Activated B cell treated with CpG ODN at 0.5 μM for 24 hours (primary cell): ENCODE measurements at regions of chr7 and their contacts with region 1.

Region 1: DNA sequence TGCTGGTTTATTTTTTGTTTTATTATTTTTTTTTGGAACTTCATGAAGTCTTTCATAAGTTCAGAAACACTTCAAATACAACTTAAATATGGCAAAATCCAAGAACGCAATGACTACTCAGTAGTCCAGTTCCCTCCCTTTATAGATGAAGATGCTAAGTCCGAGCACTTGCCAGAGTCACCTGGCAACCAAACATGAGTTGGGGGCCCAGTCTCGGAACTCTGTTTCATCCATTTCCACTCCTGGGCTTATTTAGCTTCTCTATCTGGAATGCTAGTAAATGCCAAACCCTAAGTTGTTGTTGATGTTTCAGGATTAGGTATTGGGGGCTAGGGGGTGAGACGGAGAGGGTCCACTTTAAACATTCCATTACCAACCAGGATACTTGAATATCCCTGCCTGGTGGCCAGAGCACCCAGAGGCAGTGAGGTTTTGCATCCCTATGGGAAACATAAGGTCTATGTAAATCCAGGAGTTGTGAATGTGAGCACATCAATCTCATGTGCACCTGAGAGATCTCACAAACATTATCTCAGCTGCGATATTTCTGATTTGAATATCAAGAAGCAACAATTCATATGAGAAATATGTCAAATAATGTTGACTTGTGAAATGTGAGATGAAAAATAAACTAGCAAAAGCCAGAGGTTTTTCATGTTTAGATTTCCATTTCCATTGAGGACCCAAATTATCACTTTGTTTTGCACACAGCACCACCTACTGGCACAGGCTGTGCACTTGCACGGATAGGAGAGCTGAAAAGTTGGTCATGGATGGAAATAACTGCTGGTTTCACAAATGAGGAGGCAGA is 129.3 kb downstream of the PKD1L1 start:
- DNase-seq: no peak
- ATAC-seq: peak; percentile 77
- H3K4me3 Mint-ChIP-seq: no peak overlapping the region
- H3K27ac Mint-ChIP-seq: no peak overlapping the region
- H3K4me1 Mint-ChIP-seq: peaks cover 7% of the 10 kb centered on the region
- H3K27me3 Mint-ChIP-seq: no peaks in the 10 kb centered on the region
- CTCF ChIP-seq: peak; percentile 85

Region 2: GRCh38 chr7:47266131-47266706 is 552.8 kb before region 1 on chr7:
- CTCF ChIA-PET with region 1: interaction called, 77 read pairs
- POLR2A ChIA-PET with region 1: interaction called, 4 read pairs
- intact Hi-C with region 1: loop called (anchors 1 kb)
- DNase-seq: peak; percentile 50
- ATAC-seq: peak; percentile 92
- H3K4me3 Mint-ChIP-seq: no peak overlapping the region
- H3K27ac Mint-ChIP-seq: no peak overlapping the region
- H3K4me1 Mint-ChIP-seq: no peaks in the 10 kb centered on the region
- H3K27me3 Mint-ChIP-seq: no peaks in the 10 kb centered on the region
- CTCF ChIP-seq: peak; percentile 60

Region 3: GRCh38 chr7:47383072-47383471 is 435.9 kb before region 1 on chr7:
- CTCF ChIA-PET with region 1: no interaction called
- POLR2A ChIA-PET with region 1: no interaction called
- intact Hi-C with region 1: no loop called
- DNase-seq: no peak
- ATAC-seq: no peak
- H3K4me3 Mint-ChIP-seq: no peak overlapping the region
- H3K27ac Mint-ChIP-seq: no peak overlapping the region
- H3K4me1 Mint-ChIP-seq: no peaks in the 10 kb centered on the region
- H3K27me3 Mint-ChIP-seq: no peaks in the 10 kb centered on the region
- CTCF ChIP-seq: no peak

Region 4: GRCh38 chr7:47435889-47436312 is 383.1 kb before region 1 on chr7:
- CTCF ChIA-PET with region 1: interaction called, 9 read pairs
- POLR2A ChIA-PET with region 1: no interaction called
- intact Hi-C with region 1: loop called (anchors 2 kb)
- DNase-seq: no peak
- ATAC-seq: no peak
- H3K4me3 Mint-ChIP-seq: no peak overlapping the region
- H3K27ac Mint-ChIP-seq: no peak overlapping the region
- H3K4me1 Mint-ChIP-seq: no peaks in the 10 kb centered on the region
- H3K27me3 Mint-ChIP-seq: no peaks in the 10 kb centered on the region
- CTCF ChIP-seq: no peak

Region 5: GRCh38 chr7:47444379-47445057 is 374.5 kb before region 1 on chr7:
- CTCF ChIA-PET with region 1: interaction called, 47 read pairs
- POLR2A ChIA-PET with region 1: interaction called, 5 read pairs
- intact Hi-C with region 1: loop called (anchors 1 kb)
- DNase-seq: no peak
- ATAC-seq: peak; percentile 72
- H3K4me3 Mint-ChIP-seq: no peak overlapping the region
- H3K27ac Mint-ChIP-seq: no peak overlapping the region
- H3K4me1 Mint-ChIP-seq: peaks cover 22% of the 10 kb centered on the region
- H3K27me3 Mint-ChIP-seq: no peaks in the 10 kb centered on the region
- CTCF ChIP-seq: no peak

Region 6: GRCh38 chr7:47497367-47498096 is 321.5 kb before region 1 on chr7:
- CTCF ChIA-PET with region 1: interaction called, 11 read pairs
- POLR2A ChIA-PET with region 1: no interaction called
- intact Hi-C with region 1: no loop called
- DNase-seq: no peak
- ATAC-seq: peak; percentile 81
- H3K4me3 Mint-ChIP-seq: peak overlapping the region; percentile 64
- H3K27ac Mint-ChIP-seq: peak overlapping the region; percentile 87
- H3K4me1 Mint-ChIP-seq: peaks cover 70% of the 10 kb centered on the region
- H3K27me3 Mint-ChIP-seq: no peaks in the 10 kb centered on the region
- CTCF ChIP-seq: no peak

Region 7: DNA sequence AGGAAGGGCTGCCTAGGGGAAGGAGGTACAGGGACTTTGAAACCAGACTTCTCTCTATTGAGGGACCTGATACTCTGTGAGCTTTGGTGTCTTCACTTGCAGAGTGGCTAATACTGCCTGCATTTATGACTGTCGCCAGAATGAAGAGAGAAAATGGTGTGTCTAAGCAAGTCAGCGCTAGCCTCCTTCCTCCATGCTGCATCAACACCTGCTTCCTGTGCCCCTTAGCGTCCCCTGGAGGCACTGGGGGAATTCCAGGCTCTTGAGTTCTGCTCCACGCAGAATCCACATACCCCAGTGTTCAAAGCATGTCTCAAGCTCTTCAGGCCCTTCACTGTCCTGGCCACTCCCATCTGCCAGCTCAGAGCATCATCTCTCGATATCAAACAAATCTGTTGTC is 11.2 kb before region 1 on chr7:
- CTCF ChIA-PET with region 1: interaction called, 15 read pairs
- POLR2A ChIA-PET with region 1: no interaction called
- intact Hi-C with region 1: no loop called
- DNase-seq: no peak
- ATAC-seq: peak; percentile 86
- H3K4me3 Mint-ChIP-seq: no peak overlapping the region
- H3K27ac Mint-ChIP-seq: no peak overlapping the region
- H3K4me1 Mint-ChIP-seq: peaks cover 42% of the 10 kb centered on the region
- H3K27me3 Mint-ChIP-seq: no peaks in the 10 kb centered on the region
- CTCF ChIP-seq: no peak

Region 8: DNA sequence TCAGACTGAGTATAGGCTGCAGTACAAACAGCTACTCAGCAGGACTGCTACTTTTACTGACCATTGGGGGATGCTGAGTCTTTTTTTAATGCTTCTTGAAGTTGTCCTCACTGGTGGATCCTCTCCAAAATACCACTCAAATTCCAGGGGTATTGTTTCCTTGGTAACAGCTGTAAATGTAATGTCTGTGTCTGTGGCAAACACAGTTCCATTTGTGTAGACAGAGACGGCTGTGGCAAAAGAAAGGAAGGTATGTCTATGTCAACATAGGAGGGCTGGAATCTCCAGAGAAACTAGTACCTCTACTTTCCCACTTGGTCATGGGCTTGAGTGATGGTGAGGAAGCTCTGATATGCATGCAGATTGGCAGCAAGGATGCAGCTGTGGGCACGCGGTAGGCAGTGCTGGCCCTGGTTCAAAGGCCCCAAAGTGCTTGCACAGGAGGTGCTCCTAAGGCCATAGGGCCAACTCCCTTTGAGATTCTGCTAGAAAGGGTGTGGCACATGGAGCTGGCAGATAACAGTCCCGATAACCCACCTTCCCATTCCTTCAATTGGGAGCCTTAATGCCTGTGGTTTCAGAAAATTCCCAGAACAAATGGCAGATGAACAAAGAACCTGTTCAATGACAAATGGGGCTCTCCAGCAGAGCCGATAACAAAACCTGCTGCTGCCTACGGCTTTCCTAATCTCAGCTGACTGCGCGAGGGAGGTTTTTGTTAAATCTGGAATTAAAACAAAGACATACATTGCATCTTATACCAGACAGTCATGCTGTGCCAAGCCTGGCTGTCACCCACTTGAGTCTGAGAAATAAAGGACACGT is 86.3 kb after region 1 on chr7:
- CTCF ChIA-PET with region 1: no interaction called
- POLR2A ChIA-PET with region 1: no interaction called
- intact Hi-C with region 1: no loop called
- DNase-seq: no peak
- ATAC-seq: no peak
- H3K4me3 Mint-ChIP-seq: no peak overlapping the region
- H3K27ac Mint-ChIP-seq: no peak overlapping the region
- H3K4me1 Mint-ChIP-seq: no peaks in the 10 kb centered on the region
- H3K27me3 Mint-ChIP-seq: no peaks in the 10 kb centered on the region
- CTCF ChIP-seq: no peak